H1 (cell line): ENCODE measurements at regions of chr14 and their contacts with region 1.

Region 1: GRCh38 chr14:96297000-96297399 is 41.0 kb downstream of the BDKRB1 start:
- DNase-seq: no peak
- H3K4me3 ChIP-seq: no peak overlapping the region
- H3K27ac ChIP-seq: no peak overlapping the region
- H3K4me1 ChIP-seq: no peaks in the 10 kb centered on the region
- H3K27me3 ChIP-seq: no peaks in the 10 kb centered on the region
- CTCF ChIP-seq: peak in 1 of 3 experiments; percentile 20; a peak in 2 of 4 replicates
- EP300 ChIP-seq: no peak
- POLR2A ChIP-seq: no peak
- RAD21 ChIP-seq: peak in 1 of 2 experiments; percentile 47; a peak in 3 of 4 replicates

Region 2: GRCh38 chr14:96285667-96286066 is 11.3 kb before region 1 on chr14:
- CTCF ChIA-PET with region 1: no interaction called
- POLR2A ChIA-PET with region 1: no interaction called
- DNase-seq: no peak
- H3K4me3 ChIP-seq: no peak overlapping the region
- H3K27ac ChIP-seq: no peak overlapping the region
- H3K4me1 ChIP-seq: no peaks in the 10 kb centered on the region
- H3K27me3 ChIP-seq: no peaks in the 10 kb centered on the region
- CTCF ChIP-seq: no peak
- EP300 ChIP-seq: no peak
- POLR2A ChIP-seq: no peak
- RAD21 ChIP-seq: no peak

Region 3: GRCh38 chr14:96307427-96307826 is 10.4 kb after region 1 on chr14:
- CTCF ChIA-PET with region 1: interaction called, 10 read pairs
- POLR2A ChIA-PET with region 1: no interaction called
- DNase-seq: no peak
- H3K4me3 ChIP-seq: no peak overlapping the region
- H3K27ac ChIP-seq: no peak overlapping the region
- H3K4me1 ChIP-seq: no peaks in the 10 kb centered on the region
- H3K27me3 ChIP-seq: peaks cover 0 to 1% (median 0%) of the 10 kb centered on the region in 4 experiments; a peak in 1 of 7 replicates
- CTCF ChIP-seq: peak in 1 of 3 experiments; percentile 9; a peak in 1 of 4 replicates
- EP300 ChIP-seq: no peak
- POLR2A ChIP-seq: no peak
- RAD21 ChIP-seq: no peak; a peak in 1 of 4 replicates

Region 4: DNA sequence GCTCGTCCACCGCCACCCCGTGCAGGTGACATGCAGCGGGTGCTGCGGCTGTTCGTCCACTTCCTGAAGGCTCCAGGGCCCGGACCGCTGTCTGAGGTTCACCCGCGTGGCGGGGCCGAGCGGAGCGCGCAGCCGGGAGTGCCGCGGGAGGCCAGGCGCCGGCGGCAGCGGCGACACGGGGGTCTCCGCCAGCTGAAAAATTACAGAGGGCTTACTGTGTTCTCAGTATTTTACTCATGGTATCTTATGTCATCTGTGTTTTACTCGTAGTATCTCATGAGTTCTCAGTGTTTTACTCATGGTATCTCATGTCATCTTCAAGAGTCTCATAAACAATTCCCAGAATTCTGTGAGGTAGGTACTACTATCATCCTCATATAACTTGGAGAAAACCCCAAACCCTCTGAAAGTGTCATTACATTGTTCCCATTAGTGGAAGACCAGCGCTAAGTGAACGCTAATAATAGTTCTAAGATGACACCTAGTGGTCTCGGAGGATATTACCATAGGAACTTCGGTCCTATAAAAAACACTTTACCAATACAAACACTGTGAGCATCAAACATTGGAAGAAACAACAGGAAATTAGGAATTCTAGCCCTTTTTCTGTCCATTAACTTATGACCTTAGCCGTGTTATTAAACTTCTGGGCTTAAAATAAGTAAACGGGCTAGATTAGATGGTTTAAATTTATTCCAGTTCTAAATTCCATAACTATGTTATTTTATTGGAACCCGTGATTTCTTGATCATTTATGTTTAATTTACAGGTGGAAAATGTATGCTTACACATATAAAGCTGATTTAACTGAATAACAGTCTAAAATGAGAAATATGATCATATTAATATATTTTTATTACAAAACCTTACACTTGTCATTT is 127.3 kb after region 1 on chr14:
- CTCF ChIA-PET with region 1: interaction called, 16 read pairs
- POLR2A ChIA-PET with region 1: no interaction called
- DNase-seq: no peak
- H3K4me3 ChIP-seq: no peak overlapping the region; a peak in 1 of 8 replicates
- H3K27ac ChIP-seq: no peak overlapping the region
- H3K4me1 ChIP-seq: no peaks in the 10 kb centered on the region
- H3K27me3 ChIP-seq: no peaks in the 10 kb centered on the region
- CTCF ChIP-seq: peak in 2 of 3 experiments; percentile 52 to 66; a peak in 2 of 4 replicates
- EP300 ChIP-seq: no peak
- POLR2A ChIP-seq: no peak
- RAD21 ChIP-seq: peak; percentile 91 to 92